ENCODE measurements at regions of chr3 and their contacts with region 1.

Region 1: DNA sequence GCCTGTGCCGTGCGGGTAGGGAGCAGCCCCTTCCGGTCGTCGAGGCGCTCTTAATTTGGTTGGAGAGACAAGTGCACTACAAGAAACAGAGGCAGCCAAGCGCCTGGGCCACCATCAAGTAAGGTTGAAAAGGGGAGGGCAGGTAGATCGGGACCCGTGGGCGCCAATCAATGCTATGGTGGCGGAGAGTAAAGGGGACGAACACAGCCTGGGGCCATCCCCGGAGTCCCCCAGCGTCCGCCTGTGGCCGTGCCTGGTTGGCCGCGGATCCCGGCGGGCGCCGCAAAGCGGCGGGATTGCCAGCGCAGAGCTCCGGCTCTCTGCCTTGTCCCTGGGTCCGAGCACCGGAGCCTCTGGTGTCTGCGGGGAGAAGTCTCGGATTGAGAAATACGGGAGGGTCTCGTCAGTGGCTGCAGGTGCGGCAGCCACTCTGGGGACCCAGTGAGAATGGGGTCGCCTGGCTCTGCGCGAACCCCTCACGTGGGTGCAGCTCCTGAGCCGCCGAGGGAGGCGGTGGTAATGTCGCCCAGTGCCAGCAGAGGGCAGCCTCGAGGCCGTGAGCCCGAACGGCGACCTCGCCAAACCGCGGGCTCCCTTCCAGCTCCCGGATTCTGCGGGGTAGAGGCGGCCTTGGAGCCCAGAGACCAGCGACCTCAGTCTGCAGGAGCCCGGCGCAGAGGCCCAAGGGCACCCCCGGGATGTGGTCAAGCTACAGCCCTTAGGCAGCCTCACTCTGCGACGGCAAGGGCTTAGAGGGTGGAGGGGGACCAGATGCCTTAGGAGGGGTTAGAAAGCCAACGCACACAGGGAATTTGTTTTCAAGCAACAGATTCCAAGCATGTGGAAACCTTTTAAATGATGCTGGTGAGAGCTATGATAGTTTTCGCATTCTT is 10.8 kb downstream of the FOXL2 start:
- DNase-seq: no peak
- H3K4me3 ChIP-seq: peak overlapping the region; percentile 55
- H3K27ac ChIP-seq: no peak overlapping the region
- H3K27me3 ChIP-seq: peaks cover 76% of the 10 kb centered on the region
- CTCF ChIP-seq: peak; percentile 77

Region 2: GRCh38 chr3:138479438-138479863 is 456.6 kb before region 1 on chr3:
- CTCF ChIA-PET with region 1: interaction called, 10 read pairs
- POLR2A ChIA-PET with region 1: no interaction called
- DNase-seq: no peak
- H3K4me3 ChIP-seq: no peak overlapping the region
- H3K27ac ChIP-seq: no peak overlapping the region
- H3K27me3 ChIP-seq: no peaks in the 10 kb centered on the region
- CTCF ChIP-seq: peak; percentile 95

Region 3: GRCh38 chr3:138694287-138695007 is 241.6 kb before region 1 on chr3:
- CTCF ChIA-PET with region 1: interaction called, 13 read pairs
- POLR2A ChIA-PET with region 1: no interaction called
- DNase-seq: peak; percentile 91
- H3K4me3 ChIP-seq: no peak overlapping the region
- H3K27ac ChIP-seq: peak overlapping the region; percentile 87
- H3K27me3 ChIP-seq: no peaks in the 10 kb centered on the region
- CTCF ChIP-seq: no peak

Region 4: GRCh38 chr3:138974462-138974861 is 38.4 kb after region 1 on chr3:
- CTCF ChIA-PET with region 1: interaction called, 23 read pairs
- POLR2A ChIA-PET with region 1: no interaction called
- DNase-seq: no peak
- H3K4me3 ChIP-seq: no peak overlapping the region
- H3K27ac ChIP-seq: no peak overlapping the region
- H3K27me3 ChIP-seq: peaks cover 2% of the 10 kb centered on the region
- CTCF ChIP-seq: no peak

Region 5: DNA sequence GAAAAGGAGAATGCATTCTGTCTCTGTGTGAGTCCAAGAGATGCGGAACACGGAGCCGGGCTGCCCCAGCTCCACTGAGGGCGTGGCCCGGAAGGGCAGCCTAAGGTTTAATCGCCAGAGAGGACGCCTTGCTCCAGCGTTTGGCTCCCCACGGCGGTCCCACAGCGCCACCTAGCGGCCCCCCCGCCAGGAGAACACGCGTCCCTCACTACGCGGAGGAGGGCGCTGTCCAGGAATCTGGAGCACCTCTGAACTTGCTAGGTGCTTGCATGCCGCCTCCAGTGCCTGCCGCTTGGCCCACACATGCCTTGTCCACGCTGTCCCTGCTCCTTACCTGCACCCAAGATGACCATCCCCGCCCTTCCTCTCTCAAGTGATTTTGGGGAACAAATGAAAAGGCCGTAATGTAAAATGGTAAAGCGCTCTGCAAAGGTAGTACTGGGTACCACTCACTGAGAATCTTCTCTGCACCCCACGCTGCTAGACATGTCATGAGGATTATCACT is 393.3 kb after region 1 on chr3:
- CTCF ChIA-PET with region 1: interaction called, 14 read pairs
- POLR2A ChIA-PET with region 1: no interaction called
- DNase-seq: no peak
- H3K4me3 ChIP-seq: 0 out of 2 replicates have a peak overlapping the region, but pooled peaks have one; percentile 20
- H3K27ac ChIP-seq: no peak overlapping the region
- H3K27me3 ChIP-seq: peaks cover 10% of the 10 kb centered on the region
- CTCF ChIP-seq: peak; percentile 100

Measured in AG04450 (cell line).